ENCODE measurements at regions of chrX and their contacts with region 1.

Region 1: DNA sequence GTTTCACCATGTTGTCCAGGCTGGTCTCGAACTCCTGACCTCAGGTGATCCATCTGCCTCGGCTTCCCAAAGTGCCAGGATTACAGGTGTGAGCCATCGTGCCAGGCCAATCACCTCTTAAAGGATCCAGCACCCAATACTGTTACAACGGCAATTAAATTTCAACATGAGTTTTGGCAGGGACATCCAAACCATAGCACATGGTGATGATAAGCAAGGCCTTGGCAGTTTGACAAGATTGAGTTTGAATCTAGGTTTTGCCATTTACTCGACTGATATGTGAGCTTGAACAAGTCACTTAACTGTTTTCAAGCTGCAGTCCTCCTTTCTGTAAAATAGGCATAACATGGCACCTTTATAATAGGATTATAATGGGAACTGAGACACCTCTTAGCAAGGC is 84.1 kb downstream of the GPR82 start:
- DNase-seq: no peak
- ATAC-seq: no peak
- H3K4me3 ChIP-seq: no peak overlapping the region
- H3K27ac ChIP-seq: no peak overlapping the region
- H3K4me1 ChIP-seq: no peaks in the 10 kb centered on the region
- H3K27me3 ChIP-seq: no peaks in the 10 kb centered on the region
- CTCF ChIP-seq: no peak
- POLR2A ChIP-seq: no peak

Region 2: GRCh38 chrX:42119076-42119475 is 311.0 kb after region 1 on chrX:
- in situ Hi-C with region 1: no loop called
- intact Hi-C with region 1: no loop called
- DNase-seq: no peak
- ATAC-seq: no peak
- H3K4me3 ChIP-seq: no peak overlapping the region
- H3K27ac ChIP-seq: no peak overlapping the region
- H3K4me1 ChIP-seq: no peaks in the 10 kb centered on the region
- H3K27me3 ChIP-seq: no peaks in the 10 kb centered on the region
- CTCF ChIP-seq: no peak
- POLR2A ChIP-seq: no peak

Region 3: DNA sequence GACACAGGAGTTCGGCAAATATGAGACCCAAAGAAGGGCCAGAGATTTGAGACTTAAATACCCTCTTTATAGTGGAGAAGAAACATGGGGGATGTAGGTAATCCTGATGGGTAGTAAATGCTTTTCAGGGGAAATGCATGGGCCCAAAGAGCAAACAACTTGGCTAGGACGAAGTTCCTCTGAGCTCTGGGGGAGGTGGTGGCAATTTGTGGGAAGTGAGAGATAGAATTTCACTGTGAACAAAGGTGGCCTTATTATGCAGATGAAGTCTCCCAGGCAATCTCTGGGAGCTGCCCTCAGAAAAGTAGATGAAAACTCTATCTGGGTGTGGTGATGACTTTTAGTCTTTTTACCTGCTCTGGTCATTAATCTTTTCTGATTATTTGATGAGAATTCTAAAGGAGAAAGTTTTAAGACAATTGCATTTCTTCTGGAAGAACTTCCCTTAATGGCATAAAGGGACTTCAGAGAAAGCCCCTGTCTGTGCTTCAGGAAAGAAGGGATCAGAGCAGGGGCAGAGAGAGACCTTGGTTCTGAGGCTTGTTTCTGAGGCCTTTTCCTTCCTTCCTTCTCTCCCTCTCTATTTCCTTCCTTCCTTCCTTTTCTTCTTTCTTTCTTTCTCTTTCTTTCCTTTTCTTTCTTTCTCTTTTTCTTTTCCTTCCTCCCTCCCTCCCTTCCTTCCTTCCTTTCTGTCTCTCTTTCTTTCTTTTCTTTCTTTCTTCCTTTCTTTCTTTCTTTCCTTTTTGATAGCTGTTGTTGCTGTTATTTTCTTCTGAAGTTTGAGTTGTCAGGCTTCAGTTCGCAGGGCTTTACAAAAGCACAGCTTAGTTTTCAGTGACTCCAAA is 1810.5 kb after region 1 on chrX:
- in situ Hi-C with region 1: no loop called
- intact Hi-C with region 1: loop called (anchors 5 kb)
- DNase-seq: no peak
- ATAC-seq: no peak
- H3K4me3 ChIP-seq: no peak overlapping the region
- H3K27ac ChIP-seq: no peak overlapping the region
- H3K4me1 ChIP-seq: no peaks in the 10 kb centered on the region
- H3K27me3 ChIP-seq: no peaks in the 10 kb centered on the region
- CTCF ChIP-seq: no peak
- POLR2A ChIP-seq: no peak

Measured in gastrocnemius medialis (tissue), 4 donors.